Activated CD4-positive, alpha-beta T cell treated with anti-CD3 and anti-CD28 coated beads, Interleukin-2, amount 10 ng/mL, durations not matched to agents 24 days and 14 days (primary cell): ENCODE measurements at regions of chr1 and their contacts with region 1.

Region 1: DNA sequence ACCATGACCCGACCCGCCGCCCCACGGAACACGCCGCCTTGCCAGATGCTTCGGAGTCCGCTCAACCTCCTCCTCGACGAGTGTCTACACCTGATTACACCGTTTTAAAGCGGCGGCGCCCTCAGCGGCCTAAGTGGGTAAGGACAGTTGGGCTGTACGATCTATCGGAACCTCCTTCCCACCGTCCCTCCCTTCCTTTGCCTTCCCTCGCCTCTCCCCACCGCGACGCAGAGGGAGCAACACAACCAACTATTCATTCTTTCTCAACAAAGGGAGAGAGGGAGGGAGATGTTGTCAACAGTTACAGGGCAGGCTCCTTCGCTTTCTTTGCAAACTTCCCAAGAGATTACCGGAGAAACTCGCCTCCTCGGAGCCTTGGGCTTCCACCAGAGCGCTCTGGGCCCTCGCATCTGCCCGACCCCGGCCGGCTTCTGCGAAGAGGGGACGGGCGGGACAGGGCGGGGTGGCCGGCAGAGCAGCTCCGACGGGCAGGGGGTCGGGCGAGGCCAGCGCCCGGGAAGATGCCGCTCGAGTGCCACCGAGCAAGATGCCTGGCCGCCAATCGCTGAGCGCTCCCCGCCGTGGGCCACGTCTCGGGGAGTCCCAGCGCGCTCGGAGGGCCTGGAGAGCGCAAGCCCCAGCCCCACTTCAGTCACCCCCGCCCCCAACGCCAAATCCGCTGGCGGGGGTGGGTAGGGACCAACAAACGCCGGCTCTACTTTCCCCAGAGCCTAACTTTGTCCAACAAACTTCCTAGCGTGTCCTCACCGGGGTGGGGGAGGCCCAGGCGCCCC is 683 bp downstream of the BCAR3 start:
- DNase-seq: peak; percentile 79
- H3K4me3 Mint-ChIP-seq: peak overlapping the region; percentile 83
- H3K27ac Mint-ChIP-seq: no peak overlapping the region
- H3K4me1 Mint-ChIP-seq: peaks cover 8% of the 10 kb centered on the region
- H3K27me3 Mint-ChIP-seq: peaks cover 73% of the 10 kb centered on the region

Region 2: GRCh38 chr1:93447516-93448291 is 233.2 kb before region 1 on chr1 and contains the start of gene FNBP1L:
- intact Hi-C with region 1: loop called (anchors 10 kb)
- DNase-seq: peak; percentile 80
- H3K4me3 Mint-ChIP-seq: peak within 1 kb of the TSS; percentile 83
- H3K27ac Mint-ChIP-seq: no peak within 1 kb of the TSS
- H3K4me1 Mint-ChIP-seq: peaks cover 11% of the 10 kb centered on the region
- H3K27me3 Mint-ChIP-seq: peaks cover 63% of the 10 kb centered on the region
- total RNA-seq, gene FNBP1L: 0.14 and 0.24 TPM in 2 replicates

Region 3: DNA sequence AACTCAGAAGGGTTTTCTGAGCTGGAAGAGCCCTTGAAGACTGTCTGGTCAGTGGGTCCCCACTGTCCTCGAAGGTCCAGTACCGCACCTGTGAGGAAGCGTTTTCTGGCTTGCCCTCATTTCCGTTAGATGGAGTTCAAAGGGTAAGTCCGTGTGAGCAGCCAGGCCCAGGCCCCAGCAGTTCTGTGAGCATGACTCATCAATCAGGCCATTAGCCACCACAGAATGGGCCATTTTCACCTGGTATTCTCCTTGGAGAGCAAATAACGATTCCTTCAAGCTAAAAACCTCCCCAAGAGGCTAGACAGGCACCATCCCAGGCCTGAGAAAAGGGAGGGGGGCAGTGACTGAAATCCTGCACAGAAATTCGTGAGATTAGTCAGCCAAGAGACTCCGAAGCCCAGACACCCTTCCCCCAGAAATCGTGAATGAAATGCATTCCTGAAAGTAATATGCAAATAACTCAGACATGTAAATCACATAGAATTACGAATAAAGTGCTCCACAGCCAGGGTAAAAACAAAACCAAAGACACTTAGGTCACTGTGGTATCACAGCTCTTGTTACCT is 65.3 kb before region 1 on chr1:
- intact Hi-C with region 1: no loop called
- DNase-seq: no peak
- H3K4me3 Mint-ChIP-seq: peak overlapping the region; percentile 30
- H3K27ac Mint-ChIP-seq: peak overlapping the region; percentile 84
- H3K4me1 Mint-ChIP-seq: peaks cover 17% of the 10 kb centered on the region
- H3K27me3 Mint-ChIP-seq: peaks cover 42% of the 10 kb centered on the region

Region 4: DNA sequence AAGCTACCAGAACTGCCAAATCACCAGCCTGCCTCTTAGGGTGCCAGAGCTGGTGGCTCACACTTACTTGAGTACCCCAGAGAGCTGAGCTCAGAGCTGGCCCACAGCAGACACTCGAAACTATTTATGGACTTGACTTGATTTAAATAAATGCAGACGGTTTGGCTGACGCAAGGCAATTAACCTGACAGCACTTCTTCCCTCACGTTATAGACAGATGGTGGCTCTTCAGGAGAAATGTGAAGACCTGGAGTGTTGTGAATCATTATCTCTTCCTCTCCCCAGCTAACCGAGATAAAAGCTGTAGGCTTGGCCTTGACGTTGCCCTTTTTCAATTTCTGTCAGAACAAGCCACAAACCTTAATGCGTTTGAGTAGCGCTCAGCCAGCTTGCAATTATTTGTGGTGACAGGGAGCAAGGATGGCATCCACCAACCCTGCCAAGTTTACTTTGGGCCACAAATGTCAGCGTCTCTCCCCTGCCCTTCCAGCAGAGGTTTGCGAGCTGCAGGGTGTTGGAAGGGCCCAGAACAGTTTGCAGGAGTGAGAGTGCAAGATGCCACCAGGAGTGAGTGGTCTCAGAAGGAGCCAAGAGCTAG is 34.7 kb after region 1 on chr1:
- intact Hi-C with region 1: loop called (anchors 5 kb)
- DNase-seq: peak; percentile 70
- H3K4me3 Mint-ChIP-seq: peak overlapping the region; percentile 39
- H3K27ac Mint-ChIP-seq: peak overlapping the region; percentile 72
- H3K4me1 Mint-ChIP-seq: peaks cover 46% of the 10 kb centered on the region
- H3K27me3 Mint-ChIP-seq: peaks cover 7% of the 10 kb centered on the region

Region 5: GRCh38 chr1:93814059-93814794 is 133.3 kb after region 1 on chr1:
- intact Hi-C with region 1: loop called (anchors 2 kb)
- DNase-seq: peak; percentile 88
- H3K4me3 Mint-ChIP-seq: no peak overlapping the region
- H3K27ac Mint-ChIP-seq: no peak overlapping the region
- H3K4me1 Mint-ChIP-seq: peaks cover 13% of the 10 kb centered on the region
- H3K27me3 Mint-ChIP-seq: no peaks in the 10 kb centered on the region